OCI-LY7 (cell line): ENCODE measurements at regions of chr4 and their contacts with region 1.

Region 1: DNA sequence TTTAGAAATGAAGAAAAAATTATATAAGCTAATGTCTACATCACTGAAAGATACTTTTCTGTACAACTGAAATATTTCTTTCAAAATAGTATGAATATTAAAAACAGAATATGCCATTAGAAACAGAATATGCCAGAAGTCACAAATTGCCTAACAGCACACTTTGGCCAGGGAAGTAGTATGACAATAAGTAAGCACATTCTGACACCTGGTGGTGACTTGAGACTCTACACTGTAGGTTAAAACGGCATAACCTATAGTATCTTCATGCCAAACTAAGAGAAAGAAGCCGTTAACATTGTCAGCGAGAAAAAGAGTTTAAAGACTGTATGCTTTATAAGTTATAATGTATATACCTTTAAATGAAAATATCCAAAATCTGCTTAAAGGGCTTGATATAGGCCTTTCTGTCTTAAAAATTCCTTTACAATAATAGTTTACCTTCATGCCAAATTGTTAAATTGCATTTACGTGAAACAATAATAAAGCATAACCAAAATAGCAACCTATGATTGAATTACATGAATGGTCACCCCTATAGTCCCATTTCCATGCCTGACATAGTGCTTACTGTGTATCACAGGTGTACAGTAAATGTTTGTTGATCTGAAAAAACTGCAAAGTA is 32.8 kb downstream of the FAM13A start:
- DNase-seq: peak; percentile 72
- H3K4me3 ChIP-seq: no peak overlapping the region
- H3K27ac ChIP-seq: no peak overlapping the region
- H3K4me1 ChIP-seq: no peaks in the 10 kb centered on the region
- CTCF ChIP-seq: peak; percentile 92

Region 2: DNA sequence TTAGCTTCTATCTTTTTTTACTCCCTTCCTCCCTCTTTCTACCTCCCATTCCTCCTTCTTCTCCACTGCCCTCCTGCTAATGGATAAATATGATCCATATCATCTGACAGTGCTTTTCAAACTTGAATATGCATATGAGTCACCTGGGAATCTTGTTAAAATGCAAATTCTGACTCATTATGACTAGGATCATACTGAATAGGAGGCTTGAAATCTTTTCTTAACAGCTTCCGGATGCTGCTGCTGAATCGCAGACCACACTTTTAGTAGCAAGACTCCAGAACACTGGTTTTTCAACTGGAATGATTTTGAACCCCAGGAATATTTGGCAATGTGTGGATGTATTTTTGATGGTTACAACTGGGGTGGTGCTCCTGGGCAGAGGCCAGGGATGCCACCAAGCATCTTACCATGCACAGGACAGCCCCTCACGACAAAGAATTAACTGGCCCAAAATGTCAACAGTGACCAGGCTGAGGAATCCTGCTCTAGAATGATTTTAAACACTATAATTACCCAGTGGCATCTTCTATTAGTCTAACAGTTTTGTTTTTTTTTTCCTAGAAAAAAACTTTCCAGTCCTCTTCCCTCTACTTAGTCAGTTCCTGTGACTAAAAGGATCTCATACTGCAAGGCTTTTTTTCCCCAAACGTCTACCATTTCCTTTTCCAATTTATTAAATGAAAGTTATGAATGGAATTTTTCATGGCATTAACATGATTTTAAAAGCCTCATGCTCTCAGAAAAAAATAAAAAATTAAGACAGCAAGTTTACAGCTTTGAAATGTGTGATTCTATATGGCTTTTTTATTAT is 490.0 kb before region 1 on chr4:
- CTCF ChIA-PET with region 1: no interaction called
- POLR2A ChIA-PET with region 1: no interaction called
- intact Hi-C with region 1: loop called (anchors 1 kb)
- DNase-seq: no peak
- H3K4me3 ChIP-seq: no peak overlapping the region
- H3K27ac ChIP-seq: no peak overlapping the region
- H3K4me1 ChIP-seq: no peaks in the 10 kb centered on the region
- CTCF ChIP-seq: no peak

Region 3: DNA sequence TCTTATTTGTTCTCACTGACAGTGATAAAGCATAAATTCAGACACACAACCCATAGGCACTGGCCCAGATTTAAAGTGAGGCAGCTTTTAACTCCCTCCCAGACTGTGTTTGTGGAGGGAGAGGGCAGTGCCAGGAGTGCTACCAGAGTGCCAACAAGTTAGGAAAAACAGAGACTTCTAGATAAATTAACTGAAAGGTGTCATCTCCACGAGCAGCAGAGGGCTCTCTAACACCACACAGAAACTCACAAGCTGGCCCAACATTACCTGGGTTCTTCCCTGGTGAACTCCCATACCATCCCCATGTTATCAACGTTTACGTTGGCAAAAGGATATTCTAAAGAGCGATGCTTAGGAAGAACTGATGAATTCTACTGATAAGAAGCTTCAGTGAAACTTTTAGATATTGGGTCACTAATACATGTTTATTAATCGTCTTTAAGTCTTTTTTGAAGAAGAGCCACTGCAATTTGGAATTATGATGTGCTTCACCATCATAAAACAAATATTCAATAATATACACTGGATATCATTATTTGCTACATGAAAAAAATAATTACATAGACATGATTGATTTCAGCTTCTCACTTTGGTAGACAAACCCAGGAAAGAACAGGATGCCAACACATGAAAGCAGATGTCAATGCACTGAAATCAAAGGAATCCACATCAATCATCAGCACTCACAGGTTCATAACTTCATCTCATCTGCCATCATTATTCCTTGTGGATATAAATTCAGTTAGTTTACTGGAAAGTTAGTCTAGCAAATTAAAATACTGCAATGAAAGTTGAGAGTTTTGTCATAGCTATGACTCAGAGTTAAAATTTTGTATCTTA is 205.3 kb before region 1 on chr4:
- CTCF ChIA-PET with region 1: no interaction called
- POLR2A ChIA-PET with region 1: interaction called, 3 read pairs
- intact Hi-C with region 1: loop called (anchors 2 kb)
- DNase-seq: peak; percentile 16
- H3K4me3 ChIP-seq: no peak overlapping the region
- H3K27ac ChIP-seq: no peak overlapping the region
- H3K4me1 ChIP-seq: no peaks in the 10 kb centered on the region
- CTCF ChIP-seq: peak; percentile 71

Region 4: DNA sequence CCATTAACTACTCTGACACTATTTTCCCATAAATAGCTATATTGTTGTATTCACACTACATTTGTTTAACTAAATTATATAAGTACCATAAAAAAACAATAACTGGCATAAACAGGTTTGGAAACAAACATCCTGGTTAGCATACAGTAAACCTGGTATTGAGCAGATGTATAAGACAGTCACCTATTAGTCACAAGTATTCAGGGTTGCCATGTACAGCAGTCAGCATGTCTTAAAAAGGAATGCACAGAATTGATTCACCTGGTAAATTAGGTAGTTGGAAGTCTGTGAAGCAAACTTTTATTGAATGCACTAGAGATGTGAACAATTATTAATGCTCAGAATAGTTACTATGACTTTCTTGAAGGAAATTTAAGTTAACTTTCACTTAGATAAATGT is 105.1 kb before region 1 on chr4:
- CTCF ChIA-PET with region 1: no interaction called
- POLR2A ChIA-PET with region 1: no interaction called
- intact Hi-C with region 1: no loop called
- DNase-seq: no peak
- H3K4me3 ChIP-seq: no peak overlapping the region
- H3K27ac ChIP-seq: no peak overlapping the region
- H3K4me1 ChIP-seq: no peaks in the 10 kb centered on the region
- CTCF ChIP-seq: no peak